Activated B cell treated with CpG ODN at 0.5 μM for 24 hours (primary cell): ENCODE measurements at regions of chr19 and their contacts with region 1.

Region 1: DNA sequence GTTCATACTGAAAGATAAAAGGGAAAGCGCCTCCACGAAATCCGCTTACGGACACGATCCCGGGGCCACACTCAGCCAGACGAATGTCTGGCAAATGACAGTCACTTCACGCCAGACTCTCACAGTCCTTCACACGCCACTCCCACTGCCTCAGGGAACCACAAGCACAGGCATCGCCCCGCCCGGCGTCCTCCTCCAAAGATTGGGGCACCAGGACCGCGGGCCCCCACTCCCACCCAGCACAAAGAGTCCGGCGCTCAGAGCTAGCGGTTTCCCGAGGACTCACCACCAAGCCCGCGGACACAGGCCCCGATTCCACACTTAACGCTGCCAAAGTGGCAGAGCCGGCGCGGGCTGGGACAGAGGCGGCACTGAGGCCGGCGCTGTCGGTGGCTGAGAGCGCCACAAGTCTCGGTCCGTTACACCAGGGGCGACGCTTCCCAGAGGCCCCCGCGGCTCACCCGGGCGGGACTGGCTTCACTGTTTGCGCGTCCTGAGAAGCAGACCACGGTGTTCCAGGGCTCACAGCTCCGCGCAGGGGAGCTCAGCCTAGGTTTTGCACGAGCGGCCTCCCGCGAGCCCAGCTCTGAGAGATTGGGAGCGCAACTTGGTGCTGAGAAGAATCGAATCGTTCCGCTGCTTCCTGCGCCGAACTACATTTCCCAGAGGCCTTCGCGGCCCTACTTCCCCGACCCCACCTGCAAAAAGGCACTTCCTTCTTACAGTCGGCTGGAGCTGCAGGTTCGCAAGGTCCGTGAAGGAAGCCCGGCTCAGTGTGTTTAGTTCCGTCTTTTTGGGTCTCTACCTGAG is at the start of gene ZNF569:
- DNase-seq: peak; percentile 82
- ATAC-seq: peak; percentile 69
- H3K4me3 Mint-ChIP-seq: peak within 1 kb of the TSS; percentile 99
- H3K27ac Mint-ChIP-seq: peak within 1 kb of the TSS; percentile 97
- H3K4me1 Mint-ChIP-seq: peaks cover 42% of the 10 kb centered on the region
- H3K27me3 Mint-ChIP-seq: no peaks in the 10 kb centered on the region
- CTCF ChIP-seq: no peak
- total RNA-seq, gene ZNF569: 6.1 and 6.8 TPM in 2 replicates

Region 2: GRCh38 chr19:36489118-36489919 is 977.7 kb before region 1 on chr19 and contains the start of gene ZNF566:
- CTCF ChIA-PET with region 1: no interaction called
- POLR2A ChIA-PET with region 1: interaction called, 4 read pairs
- intact Hi-C with region 1: loop called (anchors 2 kb)
- DNase-seq: peak; percentile 81
- ATAC-seq: peak; percentile 92
- H3K4me3 Mint-ChIP-seq: peak within 1 kb of the TSS; percentile 98
- H3K27ac Mint-ChIP-seq: peak within 1 kb of the TSS; percentile 99
- H3K4me1 Mint-ChIP-seq: peaks cover 46% of the 10 kb centered on the region
- H3K27me3 Mint-ChIP-seq: no peaks in the 10 kb centered on the region
- CTCF ChIP-seq: no peak
- total RNA-seq, gene ZNF566: 14.1 and 16.6 TPM in 2 replicates

Region 3: GRCh38 chr19:36796076-36796992 is 670.7 kb before region 1 on chr19:
- CTCF ChIA-PET with region 1: no interaction called
- POLR2A ChIA-PET with region 1: interaction called, 3 read pairs
- intact Hi-C with region 1: loop called (anchors 1 kb)
- DNase-seq: no peak
- ATAC-seq: no peak
- H3K4me3 Mint-ChIP-seq: peak overlapping the region; percentile 96
- H3K27ac Mint-ChIP-seq: peak overlapping the region; percentile 99
- H3K4me1 Mint-ChIP-seq: peaks cover 24% of the 10 kb centered on the region
- H3K27me3 Mint-ChIP-seq: peaks cover 4% of the 10 kb centered on the region
- CTCF ChIP-seq: no peak

Region 4: DNA sequence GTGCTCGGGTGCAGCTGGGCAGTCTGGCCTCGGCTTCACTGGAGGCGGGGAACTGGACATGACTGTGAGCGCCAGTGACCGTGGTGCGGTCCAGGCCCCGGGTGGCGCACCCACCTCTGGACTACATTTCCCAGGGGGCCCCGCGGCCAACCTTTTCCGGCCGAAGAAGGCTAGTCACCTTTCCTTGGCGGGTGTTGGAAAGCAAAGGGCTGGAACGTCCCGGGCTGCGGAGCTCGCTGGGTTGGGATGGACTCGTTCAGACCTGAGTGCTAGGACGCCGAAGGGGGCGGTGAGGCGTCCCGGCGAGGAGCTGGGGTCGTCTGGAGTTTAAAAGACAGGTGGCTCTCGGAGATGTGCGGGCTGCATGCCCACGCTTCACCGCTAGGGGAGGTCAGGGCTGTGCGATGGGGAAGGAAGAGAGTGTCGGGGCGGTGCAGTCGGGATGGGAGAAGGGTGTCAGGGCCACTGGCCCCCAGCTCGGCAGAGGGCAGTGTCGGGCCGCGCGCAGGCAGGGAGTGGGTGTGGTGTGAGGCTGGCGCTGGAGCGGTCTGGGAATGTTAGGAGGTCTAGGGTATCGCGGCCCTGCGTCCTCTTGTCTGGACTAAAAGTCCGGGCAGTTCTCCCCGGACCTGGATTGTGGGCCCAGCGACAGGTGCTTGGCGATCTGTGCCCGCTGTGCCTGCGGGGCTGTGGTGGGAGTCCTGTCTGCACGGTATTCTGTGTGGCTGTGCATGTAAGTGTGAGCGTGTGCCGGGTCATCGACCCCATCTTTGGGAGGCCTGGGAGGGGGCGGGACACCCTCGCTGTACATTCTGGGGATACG is 493.8 kb before region 1 on chr19:
- CTCF ChIA-PET with region 1: no interaction called
- POLR2A ChIA-PET with region 1: interaction called, 3 read pairs
- intact Hi-C with region 1: loop called (anchors 1 kb)
- DNase-seq: peak; percentile 75
- ATAC-seq: peak; percentile 97
- H3K4me3 Mint-ChIP-seq: peak overlapping the region; percentile 98
- H3K27ac Mint-ChIP-seq: peak overlapping the region; percentile 94
- H3K4me1 Mint-ChIP-seq: peaks cover 10% of the 10 kb centered on the region
- H3K27me3 Mint-ChIP-seq: no peaks in the 10 kb centered on the region
- CTCF ChIP-seq: peak; percentile 38

Region 5: DNA sequence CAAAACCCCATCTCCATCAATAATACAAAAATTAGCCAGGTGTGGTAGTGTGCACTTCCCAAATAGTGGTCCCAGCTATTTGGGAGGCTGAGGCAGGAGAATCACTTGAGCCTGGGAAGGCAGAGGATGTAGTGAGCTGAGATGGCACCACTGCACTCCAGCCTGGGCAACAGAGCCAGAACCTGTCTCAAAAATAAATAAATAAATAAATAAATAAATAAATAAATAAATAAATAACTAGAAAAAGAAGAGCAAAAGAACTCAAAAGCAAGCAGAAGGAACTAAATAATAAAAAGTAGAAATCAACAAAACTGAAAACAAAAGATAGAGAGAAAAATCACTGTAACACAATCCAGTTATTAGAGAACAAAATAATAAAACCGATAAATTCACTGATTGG is 306.9 kb before region 1 on chr19:
- CTCF ChIA-PET with region 1: no interaction called
- POLR2A ChIA-PET with region 1: no interaction called
- intact Hi-C with region 1: no loop called
- DNase-seq: no peak
- ATAC-seq: no peak
- H3K4me3 Mint-ChIP-seq: no peak overlapping the region
- H3K27ac Mint-ChIP-seq: no peak overlapping the region
- H3K4me1 Mint-ChIP-seq: no peaks in the 10 kb centered on the region
- H3K27me3 Mint-ChIP-seq: no peaks in the 10 kb centered on the region
- CTCF ChIP-seq: no peak

Region 6: GRCh38 chr19:37227996-37228395 is 239.0 kb before region 1 on chr19:
- CTCF ChIA-PET with region 1: no interaction called
- POLR2A ChIA-PET with region 1: interaction called, 10 read pairs
- intact Hi-C with region 1: no loop called
- DNase-seq: no peak
- ATAC-seq: no peak
- H3K4me3 Mint-ChIP-seq: no peak overlapping the region
- H3K27ac Mint-ChIP-seq: no peak overlapping the region
- H3K4me1 Mint-ChIP-seq: no peaks in the 10 kb centered on the region
- H3K27me3 Mint-ChIP-seq: no peaks in the 10 kb centered on the region
- CTCF ChIP-seq: no peak

Region 7: DNA sequence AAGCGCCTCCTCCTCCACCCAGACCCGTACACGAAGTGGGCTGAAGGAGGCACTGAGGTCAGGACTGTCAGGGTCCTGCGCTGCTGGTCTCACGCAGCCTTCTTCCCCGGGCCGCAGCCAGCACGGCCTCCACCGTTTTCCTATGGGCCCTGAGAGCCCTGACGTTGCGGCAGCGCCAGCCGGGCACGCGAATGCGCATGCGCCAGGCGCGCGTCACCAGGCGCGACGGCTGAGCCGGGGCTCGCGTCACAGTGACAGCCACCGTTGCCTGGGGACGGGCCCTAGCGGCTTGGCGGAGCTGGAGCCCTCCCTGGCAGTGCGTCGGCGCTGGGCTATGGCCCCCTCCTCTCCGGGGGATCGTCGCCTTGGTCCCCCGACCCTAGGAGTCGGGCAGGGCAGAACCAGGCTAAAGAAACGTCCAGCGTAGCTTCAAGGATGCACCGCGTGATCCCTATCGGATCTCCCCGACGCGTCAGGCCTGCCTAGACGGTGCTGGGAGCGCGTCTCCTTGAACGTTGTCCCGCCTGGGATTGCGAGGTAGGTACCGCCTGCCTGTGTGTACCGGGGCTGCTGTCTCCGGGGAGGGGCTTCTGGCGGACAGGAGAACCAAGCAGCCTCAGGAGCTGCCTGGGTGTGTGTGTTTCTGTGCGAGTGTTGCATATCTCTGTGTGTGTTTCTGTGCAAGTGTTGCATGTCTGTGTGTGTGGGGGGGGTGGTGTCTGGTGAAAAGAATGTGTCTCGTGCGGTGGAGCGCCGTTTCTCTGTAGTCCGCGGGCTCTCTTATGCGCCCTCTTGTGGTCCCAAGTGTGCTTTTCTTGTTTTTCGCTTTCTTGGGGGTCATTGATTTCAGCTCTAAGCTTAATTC is 84.4 kb after region 1 on chr19:
- CTCF ChIA-PET with region 1: no interaction called
- POLR2A ChIA-PET with region 1: no interaction called
- intact Hi-C with region 1: loop called (anchors 1 kb)
- DNase-seq: peak; percentile 70
- ATAC-seq: peak; percentile 85
- H3K4me3 Mint-ChIP-seq: peak overlapping the region; percentile 93
- H3K27ac Mint-ChIP-seq: peak overlapping the region; percentile 91
- H3K4me1 Mint-ChIP-seq: peaks cover 12% of the 10 kb centered on the region
- H3K27me3 Mint-ChIP-seq: no peaks in the 10 kb centered on the region
- CTCF ChIP-seq: no peak

Region 8: GRCh38 chr19:37583340-37583739 is 116.3 kb after region 1 on chr19:
- CTCF ChIA-PET with region 1: no interaction called
- POLR2A ChIA-PET with region 1: no interaction called
- intact Hi-C with region 1: no loop called
- DNase-seq: no peak
- ATAC-seq: no peak
- H3K4me3 Mint-ChIP-seq: no peak overlapping the region
- H3K27ac Mint-ChIP-seq: no peak overlapping the region
- H3K4me1 Mint-ChIP-seq: no peaks in the 10 kb centered on the region
- H3K27me3 Mint-ChIP-seq: no peaks in the 10 kb centered on the region
- CTCF ChIP-seq: no peak

Region 9: GRCh38 chr19:37719111-37719926 is 252.3 kb after region 1 on chr19 and contains the start of gene ZNF607:
- CTCF ChIA-PET with region 1: no interaction called
- POLR2A ChIA-PET with region 1: no interaction called
- intact Hi-C with region 1: loop called (anchors 2 kb)
- DNase-seq: peak; percentile 84
- ATAC-seq: peak; percentile 94
- H3K4me3 Mint-ChIP-seq: peak within 1 kb of the TSS; percentile 94
- H3K27ac Mint-ChIP-seq: peak within 1 kb of the TSS; percentile 91
- H3K4me1 Mint-ChIP-seq: peaks cover 17% of the 10 kb centered on the region
- H3K27me3 Mint-ChIP-seq: no peaks in the 10 kb centered on the region
- CTCF ChIP-seq: no peak
- total RNA-seq, gene ZNF607: 9.6 and 10.3 TPM in 2 replicates